Breast epithelium (tissue), 4 donors: ENCODE measurements at regions of chr10 and their contacts with region 1.

Region 1: GRCh38 chr10:104867966-104868598 is 227.0 kb downstream of the SORCS3 start:
- DNase-seq: no peak
- H3K4me3 ChIP-seq: no peak overlapping the region
- H3K27ac ChIP-seq: no peak overlapping the region
- H3K4me1 ChIP-seq: no peaks in the 10 kb centered on the region
- H3K27me3 ChIP-seq: no peaks in the 10 kb centered on the region
- CTCF ChIP-seq: no peak
- POLR2A ChIP-seq: no peak

Region 2: GRCh38 chr10:104910712-104911111 is 42.6 kb after region 1 on chr10:
- intact Hi-C with region 1: no loop called
- DNase-seq: no peak
- H3K4me3 ChIP-seq: no peak overlapping the region
- H3K27ac ChIP-seq: no peak overlapping the region
- H3K4me1 ChIP-seq: no peaks in the 10 kb centered on the region
- H3K27me3 ChIP-seq: peaks cover 0 to 6% of the 10 kb centered on the region in 2 donors
- CTCF ChIP-seq: no peak
- POLR2A ChIP-seq: no peak

Region 3: DNA sequence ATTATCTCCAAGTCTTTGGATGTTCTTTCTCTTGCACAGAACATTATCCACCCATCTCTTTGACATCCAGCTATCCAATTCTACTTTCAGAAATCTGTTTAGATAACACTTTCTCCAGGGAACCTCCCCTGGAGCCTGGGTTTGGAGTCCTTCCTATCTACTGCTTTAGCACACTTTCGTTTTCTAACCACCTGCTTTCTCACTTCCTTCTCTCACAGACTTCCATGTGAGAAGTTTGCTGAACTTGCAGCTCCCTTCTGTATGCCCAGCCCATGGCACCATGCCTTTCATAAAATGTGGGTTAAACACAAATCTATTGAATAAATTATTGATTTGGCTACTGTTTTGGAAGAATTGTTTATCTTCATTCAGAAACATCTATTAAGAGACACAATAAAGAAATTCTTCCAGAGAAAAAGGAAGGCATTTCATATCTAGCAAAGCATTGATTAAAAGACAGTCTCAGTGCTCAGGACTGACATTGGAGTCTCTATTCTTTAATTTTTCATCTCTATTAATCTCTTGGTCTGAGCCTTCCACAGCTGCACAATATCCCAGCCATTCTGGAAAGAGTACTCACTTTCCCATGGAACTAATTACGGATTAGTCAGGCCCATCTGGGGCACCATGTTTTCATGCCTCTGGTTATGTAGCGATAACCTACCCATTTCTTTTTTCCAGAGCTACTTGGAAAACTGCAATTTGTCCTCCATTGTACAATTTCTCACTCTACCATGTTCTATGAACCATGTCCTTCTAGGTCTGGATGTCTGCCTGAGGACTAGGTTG is 850.3 kb after region 1 on chr10:
- intact Hi-C with region 1: loop called (anchors 5 kb)
- DNase-seq: no peak
- H3K4me3 ChIP-seq: no peak overlapping the region
- H3K27ac ChIP-seq: no peak overlapping the region
- H3K4me1 ChIP-seq: no peaks in the 10 kb centered on the region
- H3K27me3 ChIP-seq: no peaks in the 10 kb centered on the region
- CTCF ChIP-seq: no peak
- POLR2A ChIP-seq: no peak